Breast epithelium (tissue), 4 donors: ENCODE measurements at regions of chrX and their contacts with region 1.

Region 1: DNA sequence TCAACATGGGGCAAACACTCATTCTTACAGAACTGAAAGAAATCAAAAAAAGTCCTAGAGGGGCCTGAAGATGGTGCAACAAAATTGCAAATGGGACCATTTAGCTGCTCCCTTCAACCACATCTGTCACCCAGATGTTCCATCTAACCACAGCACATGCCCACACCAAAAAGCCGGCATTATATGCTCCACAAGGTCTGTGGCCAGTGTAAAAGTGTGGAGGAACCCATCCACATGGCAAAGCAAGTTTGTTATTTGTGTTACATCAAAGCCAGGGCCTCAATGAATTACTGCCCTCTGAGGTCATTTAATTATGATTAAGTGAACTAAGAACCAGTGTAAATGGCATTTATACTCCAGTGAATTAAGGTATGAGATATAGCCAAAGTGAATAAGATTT is 48.9 kb upstream of the FGF16 start:
- DNase-seq: no peak
- H3K4me3 ChIP-seq: no peak overlapping the region
- H3K27ac ChIP-seq: no peak overlapping the region
- H3K4me1 ChIP-seq: no peaks in the 10 kb centered on the region
- H3K27me3 ChIP-seq: no peaks in the 10 kb centered on the region
- CTCF ChIP-seq: no peak
- POLR2A ChIP-seq: no peak

Region 2: DNA sequence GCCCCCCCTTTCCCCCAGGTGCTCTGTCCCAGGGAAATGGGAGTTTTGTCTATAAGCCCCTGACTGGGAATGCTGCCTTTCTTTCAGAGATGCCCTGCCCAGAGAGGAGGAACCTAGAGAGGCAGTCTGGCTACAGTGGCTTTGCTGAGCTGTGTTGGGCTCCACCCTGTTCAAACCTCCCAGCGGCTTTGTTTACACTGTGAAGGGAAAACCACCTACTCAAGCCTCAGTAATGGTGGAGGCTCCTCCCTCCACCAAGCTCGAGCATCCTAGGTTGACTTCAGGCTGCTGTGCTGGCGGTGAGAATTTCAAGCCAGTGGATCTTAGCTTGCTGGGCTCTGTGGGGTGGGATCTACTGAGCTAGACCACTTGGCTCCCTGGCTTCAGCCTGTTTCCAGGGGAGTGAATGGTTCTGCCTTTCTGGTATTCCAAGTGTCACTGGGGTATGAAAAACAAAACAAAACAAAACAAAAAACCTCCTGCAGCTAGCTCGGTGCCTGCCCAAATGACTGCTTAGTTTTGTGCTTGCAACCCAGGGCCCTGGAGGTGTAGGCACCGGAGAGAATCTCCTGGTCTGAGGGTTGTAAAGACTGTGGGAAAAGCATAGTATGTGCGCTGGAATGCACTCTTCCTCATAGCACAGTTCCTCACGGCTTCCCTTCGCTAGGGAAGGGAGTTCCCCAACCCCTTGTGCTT is 1927.1 kb after region 1 on chrX:
- intact Hi-C with region 1: loop called (anchors 10 kb)
- DNase-seq: no peak
- H3K4me3 ChIP-seq: no peak overlapping the region
- H3K27ac ChIP-seq: no peak overlapping the region
- H3K4me1 ChIP-seq: no peaks in the 10 kb centered on the region
- H3K27me3 ChIP-seq: peaks cover 0 to 12% of the 10 kb centered on the region in 2 donors
- CTCF ChIP-seq: no peak
- POLR2A ChIP-seq: no peak